PC-9 (cell line): ENCODE measurements at regions of chr1 and their contacts with region 1.

Region 1: GRCh38 chr1:191624044-191624443 is 534.2 kb upstream of the RGS18 start:
- DNase-seq: no peak
- H3K4me3 ChIP-seq: no peak overlapping the region
- H3K27ac ChIP-seq: no peak overlapping the region
- H3K4me1 ChIP-seq: no peaks in the 10 kb centered on the region
- H3K27me3 ChIP-seq: no peaks in the 10 kb centered on the region
- CTCF ChIP-seq: no peak

Region 2: DNA sequence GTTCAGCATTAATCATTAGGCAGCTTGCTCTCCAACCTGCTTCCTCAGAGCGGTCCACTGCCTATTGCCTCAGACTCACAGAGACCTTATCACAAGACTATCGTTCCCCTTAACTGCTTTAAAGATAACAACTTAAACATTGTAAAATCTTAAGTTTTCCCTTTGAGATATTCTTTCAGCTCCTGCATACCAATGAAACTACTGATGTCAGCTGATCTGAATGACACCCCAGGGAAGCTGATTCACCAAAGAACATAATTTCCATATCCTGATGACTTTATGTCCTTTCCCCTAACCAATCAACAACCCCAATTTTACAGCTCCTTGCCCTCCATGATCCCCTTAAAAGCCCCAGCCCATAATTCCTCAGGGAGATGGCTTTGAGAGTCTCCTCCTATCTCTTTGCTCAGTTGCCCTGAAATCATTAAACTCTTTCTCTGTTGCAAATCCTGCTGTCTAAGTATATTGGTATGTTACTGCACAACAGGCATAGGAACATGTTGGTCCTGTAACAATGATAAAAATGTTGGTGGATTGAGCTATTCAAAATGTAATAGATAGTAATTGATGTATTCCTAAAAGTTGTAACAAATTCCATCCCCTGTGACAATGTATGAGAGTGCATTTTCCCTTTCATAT is 87.1 kb before region 1 on chr1:
- CTCF ChIA-PET with region 1: no interaction called
- POLR2A ChIA-PET with region 1: no interaction called
- intact Hi-C with region 1: no loop called
- DNase-seq: no peak
- H3K4me3 ChIP-seq: no peak overlapping the region
- H3K27ac ChIP-seq: no peak overlapping the region
- H3K4me1 ChIP-seq: no peaks in the 10 kb centered on the region
- H3K27me3 ChIP-seq: no peaks in the 10 kb centered on the region
- CTCF ChIP-seq: no peak

Region 3: DNA sequence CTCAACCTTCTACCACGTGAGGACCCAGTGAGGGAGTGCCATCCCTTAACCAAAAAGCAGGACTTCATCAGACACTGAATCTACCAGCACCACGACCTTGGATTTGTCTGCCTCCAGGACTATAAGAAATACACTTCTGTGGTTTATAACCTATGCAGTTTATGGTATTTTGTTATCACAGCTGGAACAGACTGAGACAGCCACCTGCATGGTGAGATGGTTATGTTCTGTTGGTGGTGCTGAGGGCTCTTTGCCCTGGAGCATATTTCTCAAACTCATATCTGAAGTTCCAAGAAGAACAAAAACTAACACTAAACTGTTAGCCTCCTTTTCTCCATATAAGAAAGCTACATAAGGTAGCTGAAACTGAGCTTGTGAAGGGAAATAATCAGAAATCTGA is 464.5 kb after region 1 on chr1:
- CTCF ChIA-PET with region 1: no interaction called
- POLR2A ChIA-PET with region 1: interaction called, 11 read pairs
- intact Hi-C with region 1: no loop called
- DNase-seq: no peak
- H3K4me3 ChIP-seq: no peak overlapping the region
- H3K27ac ChIP-seq: no peak overlapping the region
- H3K4me1 ChIP-seq: no peaks in the 10 kb centered on the region
- H3K27me3 ChIP-seq: no peaks in the 10 kb centered on the region
- CTCF ChIP-seq: no peak